Left ventricle myocardium superior (tissue), 1 donor: ENCODE measurements at regions of chr18 and their contacts with region 1.

Region 1: GRCh38 chr18:45677276-45677807 is 46.6 kb upstream of the SLC14A1 start:
- DNase-seq: no peak
- ATAC-seq: no peak

Region 2: DNA sequence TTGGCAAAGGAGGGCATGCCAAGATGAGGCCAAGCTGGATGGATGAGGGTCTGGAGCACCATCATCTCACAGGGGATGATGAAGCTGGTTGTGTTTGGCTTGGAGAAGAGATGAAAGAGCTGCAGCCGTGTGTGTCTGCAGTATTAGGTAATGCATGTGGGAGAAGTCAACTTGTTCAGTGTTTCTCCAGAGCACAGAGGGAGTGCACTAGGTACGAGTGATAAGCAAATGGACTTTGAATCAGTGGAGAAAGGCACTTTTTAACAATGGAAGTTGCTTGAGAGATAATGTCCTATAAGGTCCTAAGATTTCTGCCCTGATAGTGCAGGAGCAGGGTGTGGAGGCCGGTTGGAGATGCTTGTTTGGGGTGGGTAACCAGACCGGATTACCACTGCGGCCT is 26.1 kb before region 1 on chr18:
- intact Hi-C with region 1: loop called (anchors 1 kb)
- DNase-seq: no peak
- ATAC-seq: no peak